ENCODE measurements at regions of chr11 and their contacts with region 1.

Region 1: DNA sequence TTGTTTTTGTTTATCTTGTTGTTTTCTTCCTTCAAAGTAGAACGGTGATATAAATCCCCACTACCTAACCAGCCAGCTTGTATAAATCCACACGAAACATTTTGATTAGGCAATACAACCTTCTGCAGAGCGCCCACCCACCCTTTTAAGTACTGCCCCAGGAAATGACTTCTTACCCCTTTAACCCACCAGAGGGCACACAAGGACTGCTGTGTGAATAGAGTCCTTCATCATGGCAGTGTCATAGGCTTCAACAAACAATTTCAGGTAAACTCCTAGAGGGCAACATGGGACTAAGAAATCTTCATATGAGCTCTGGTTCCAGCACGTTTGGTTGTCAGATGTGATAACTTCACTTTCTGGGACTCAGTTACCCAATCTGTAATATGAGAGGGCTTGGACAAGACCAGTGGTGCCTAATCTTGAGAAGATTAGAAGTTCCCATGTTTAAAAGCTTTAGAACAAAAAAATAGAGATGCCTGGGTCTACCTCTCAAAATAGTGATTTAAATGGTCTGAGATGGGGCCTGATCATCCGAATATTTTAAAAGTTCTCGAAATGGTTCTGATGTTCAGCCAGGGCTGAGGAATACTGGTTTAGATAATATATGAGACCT is 56.1 kb downstream of the PIWIL4 start:
- DNase-seq: no peak
- ATAC-seq: peak; percentile 96 to 98 (median 98)
- H3K4me3 ChIP-seq: no peak overlapping the region
- H3K27ac ChIP-seq: no peak overlapping the region
- H3K4me1 ChIP-seq: no peaks in the 10 kb centered on the region
- H3K27me3 ChIP-seq: no peaks in the 10 kb centered on the region
- CTCF ChIP-seq: peak; percentile 88

Region 2: DNA sequence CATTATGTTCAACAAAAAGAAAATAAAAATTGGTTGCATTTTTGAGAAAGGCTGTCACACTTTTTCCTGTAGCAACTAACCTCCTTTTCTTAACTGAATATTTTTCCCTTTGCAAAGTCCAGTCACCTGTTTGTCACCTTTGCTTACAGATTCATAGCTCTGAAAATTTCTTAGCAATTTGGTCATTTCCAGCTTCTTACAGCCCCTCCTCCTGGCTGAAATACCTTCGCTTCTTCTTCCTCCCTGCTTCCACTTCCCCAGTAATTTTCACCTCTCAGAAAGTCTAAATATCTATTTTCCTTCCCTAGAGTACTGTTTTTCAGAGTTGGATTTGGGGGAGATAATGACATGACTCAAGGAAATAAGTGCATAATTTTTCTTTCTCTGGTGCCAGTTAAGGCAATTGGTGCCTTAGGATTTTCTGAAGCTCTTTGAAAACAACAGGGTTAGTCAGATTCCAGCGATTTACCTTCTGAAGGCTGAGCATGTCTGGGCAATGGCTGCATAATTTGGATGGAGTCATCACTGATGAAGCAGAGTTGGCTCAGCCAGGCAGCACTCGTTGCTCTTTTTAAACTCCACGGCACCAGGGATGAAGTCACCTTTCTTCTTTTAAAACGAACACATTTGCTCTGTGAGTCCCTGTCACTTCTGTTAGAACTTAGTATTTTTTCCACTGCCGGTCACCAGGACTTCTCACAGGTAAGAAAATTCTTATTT is 82.8 kb after region 1 on chr11:
- intact Hi-C with region 1: loop called in 1 of 2 experiments (anchors 5 kb)
- DNase-seq: peak in 1 of 2 donors; percentile 64
- ATAC-seq: peak; percentile 86 to 93 (median 87)
- H3K4me3 ChIP-seq: peak overlapping the region; percentile 80
- H3K27ac ChIP-seq: peak overlapping the region; percentile 95
- H3K4me1 ChIP-seq: peaks cover 35% of the 10 kb centered on the region
- H3K27me3 ChIP-seq: no peaks in the 10 kb centered on the region
- CTCF ChIP-seq: no peak

Region 3: DNA sequence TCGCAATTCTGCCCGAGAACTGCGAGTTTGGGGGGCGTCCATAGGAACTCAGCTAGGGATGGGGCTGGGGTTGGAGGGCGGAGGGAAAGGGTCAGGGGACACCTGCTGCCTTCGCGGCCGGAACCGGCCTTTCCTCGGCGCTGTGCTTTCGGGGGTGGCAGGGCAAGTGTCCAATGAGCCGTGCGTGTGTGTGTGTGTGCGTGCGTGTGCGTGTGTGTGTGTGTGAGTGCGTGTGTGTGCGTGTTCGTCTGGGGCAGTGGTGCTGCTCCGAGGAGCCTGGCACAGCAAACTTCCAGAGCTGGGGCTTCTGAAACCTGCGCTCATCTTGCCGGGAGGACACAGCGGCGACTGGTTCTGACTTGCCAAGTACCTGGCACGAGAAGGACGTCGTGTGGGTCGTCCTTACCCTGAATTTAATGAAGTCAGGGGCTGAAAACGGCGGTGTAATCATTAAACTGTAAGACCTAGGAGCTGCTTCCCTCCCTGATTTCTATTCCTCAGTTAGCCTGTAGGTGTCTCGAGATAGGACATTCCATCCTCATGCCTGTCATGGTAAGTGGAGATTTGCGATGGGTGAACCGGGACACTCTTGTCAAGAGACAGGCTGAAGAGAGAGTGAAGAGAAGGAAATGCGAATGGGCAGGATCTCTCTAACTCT is 117.9 kb after region 1 on chr11:
- intact Hi-C with region 1: loop called in 1 of 2 experiments (anchors 5 kb)
- DNase-seq: peak; percentile 34 to 70
- ATAC-seq: peak; percentile 86 to 94 (median 91)
- H3K4me3 ChIP-seq: peak overlapping the region; percentile 70
- H3K27ac ChIP-seq: peak overlapping the region; percentile 65
- H3K4me1 ChIP-seq: peaks cover 22% of the 10 kb centered on the region
- H3K27me3 ChIP-seq: no peaks in the 10 kb centered on the region
- CTCF ChIP-seq: peak; percentile 54

Region 4: GRCh38 chr11:94897330-94897768 is 274.1 kb after region 1 on chr11:
- intact Hi-C with region 1: loop called (anchors 1 to 5 kb)
- DNase-seq: no peak
- ATAC-seq: peak in 3 of 4 donors; percentile 23 to 51 (median 35)
- H3K4me3 ChIP-seq: no peak overlapping the region
- H3K27ac ChIP-seq: no peak overlapping the region
- H3K4me1 ChIP-seq: no peaks in the 10 kb centered on the region
- H3K27me3 ChIP-seq: no peaks in the 10 kb centered on the region
- CTCF ChIP-seq: peak; percentile 81